BJ (cell line): ENCODE measurements at regions of chr12 and their contacts with region 1.

Region 1: DNA sequence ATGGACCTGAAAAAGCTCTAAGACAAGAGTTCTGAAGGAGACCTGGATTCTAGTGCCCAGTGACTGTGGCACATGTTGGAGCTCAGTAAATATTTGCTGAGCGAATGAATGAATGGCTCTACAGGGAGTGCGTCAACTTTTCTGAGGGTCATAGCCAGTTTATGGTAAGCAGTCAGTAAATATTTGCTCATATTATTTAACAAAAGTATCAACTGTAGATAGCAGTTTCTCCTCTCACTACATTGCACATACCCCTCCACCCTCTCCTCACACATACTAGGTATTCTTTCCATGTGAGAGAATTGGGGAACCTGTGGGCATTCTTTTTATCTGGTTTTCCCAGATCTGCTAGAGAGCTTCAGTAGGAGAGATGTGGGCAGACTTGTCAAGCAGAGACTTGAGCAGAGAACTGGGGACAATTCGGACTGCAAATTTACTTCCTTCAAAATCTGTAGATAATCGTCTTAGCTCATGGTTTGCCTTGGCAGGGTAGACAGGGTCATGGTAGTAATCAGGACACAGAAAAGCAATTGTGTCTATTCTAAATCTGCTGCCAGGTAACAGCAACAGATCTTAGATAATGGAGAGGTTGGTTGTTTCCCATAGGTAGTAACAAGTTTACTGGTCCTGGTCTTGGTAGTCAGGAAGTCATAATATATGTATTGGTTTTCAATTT is 5.7 kb downstream of the SLC4A8 start:
- DNase-seq: no peak
- H3K4me3 ChIP-seq: no peak overlapping the region
- H3K27me3 ChIP-seq: no peaks in the 10 kb centered on the region
- CTCF ChIP-seq: no peak

Region 2: GRCh38 chr12:50934981-50935807 is 495.2 kb before region 1 on chr12:
- CTCF ChIA-PET with region 1: no interaction called
- POLR2A ChIA-PET with region 1: no interaction called
- DNase-seq: peak; percentile 37
- H3K4me3 ChIP-seq: no peak overlapping the region
- H3K27me3 ChIP-seq: no peaks in the 10 kb centered on the region
- CTCF ChIP-seq: no peak

Region 3: DNA sequence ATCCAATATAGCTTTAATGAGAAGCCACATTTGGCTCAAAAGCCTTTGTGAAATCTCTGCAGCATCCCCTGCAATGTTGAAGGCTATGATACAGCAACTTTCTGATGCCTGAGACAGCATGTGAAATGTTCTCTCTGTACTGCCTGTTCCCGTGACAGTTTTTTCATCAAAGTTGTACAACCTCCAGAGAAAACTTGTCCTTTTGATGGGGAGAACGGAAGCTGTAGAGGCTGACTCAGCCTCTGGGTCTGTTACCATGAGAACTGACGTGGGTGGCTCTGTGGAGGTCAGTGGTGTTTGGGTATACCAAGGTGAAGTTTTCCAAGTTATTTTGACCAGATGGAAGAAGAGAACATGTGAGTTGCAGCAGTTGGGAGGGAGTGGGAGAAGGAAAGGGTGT is 11.2 kb after region 1 on chr12:
- CTCF ChIA-PET with region 1: interaction called, 13 read pairs
- POLR2A ChIA-PET with region 1: no interaction called
- DNase-seq: no peak
- H3K4me3 ChIP-seq: no peak overlapping the region
- H3K27me3 ChIP-seq: no peaks in the 10 kb centered on the region
- CTCF ChIP-seq: no peak